ENCODE measurements at regions of chr9 and their contacts with region 1.

Region 1: DNA sequence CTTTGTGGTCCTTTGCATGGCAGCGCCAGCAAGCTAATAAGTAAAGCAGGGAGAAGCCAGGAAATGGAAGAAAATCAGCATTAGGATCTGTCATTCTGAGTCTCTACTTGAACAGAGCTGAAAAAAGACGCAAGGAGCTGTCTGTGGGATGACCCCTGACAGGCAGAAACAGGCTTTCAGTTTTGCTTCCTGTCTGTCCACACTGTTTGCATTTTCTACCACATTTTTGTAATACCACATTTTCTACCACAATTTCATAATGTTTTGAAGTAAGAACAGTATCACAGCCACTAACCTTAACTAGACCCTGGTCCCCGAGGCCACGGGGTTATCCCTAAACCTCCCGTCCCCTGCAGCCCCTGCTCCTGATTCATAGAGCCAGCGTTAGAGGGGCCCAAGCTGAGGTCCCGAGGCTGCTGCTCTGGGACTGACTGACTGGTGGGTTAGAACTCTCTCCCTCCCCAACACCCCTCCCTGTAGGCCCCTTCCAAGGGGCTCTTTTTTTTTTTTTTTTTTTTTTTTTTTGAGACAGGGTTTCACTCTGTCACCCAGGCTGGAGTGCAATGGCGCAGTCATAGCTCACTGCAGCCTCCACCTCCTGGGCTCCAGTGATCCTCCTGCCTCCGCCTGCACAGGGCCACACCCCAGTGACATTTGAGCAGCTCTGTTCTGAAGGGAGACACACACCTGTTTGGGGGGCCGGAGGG is 4.0 kb upstream of the CLIC3 start:
- DNase-seq: peak; percentile 82
- ATAC-seq: peak; percentile 87
- H3K4me3 ChIP-seq: no peak overlapping the region
- H3K27ac ChIP-seq: no peak overlapping the region
- H3K4me1 ChIP-seq: peaks cover 37% of the 10 kb centered on the region
- H3K27me3 ChIP-seq: peaks cover 2 to 10% of the 10 kb centered on the region in 2 experiments; a peak in 3 of 4 replicates
- CTCF ChIP-seq: no peak
- EP300 ChIP-seq: peak; percentile 50 to 51; a peak in 2 of 4 replicates
- POLR2A ChIP-seq: no peak
- RAD21 ChIP-seq: no peak

Region 2: GRCh38 chr9:136567651-136568287 is 432.6 kb before region 1 on chr9:
- CTCF ChIA-PET with region 1: no interaction called
- POLR2A ChIA-PET with region 1: no interaction called
- RAD21 ChIA-PET with region 1: no interaction called
- SMC1A ChIA-PET with region 1: no interaction called
- in situ Hi-C with region 1: no loop called
- intact Hi-C with region 1: no loop called
- DNase-seq: no peak
- ATAC-seq: no peak
- H3K4me3 ChIP-seq: no peak overlapping the region
- H3K27ac ChIP-seq: no peak overlapping the region
- H3K4me1 ChIP-seq: peaks cover 24% of the 10 kb centered on the region
- H3K27me3 ChIP-seq: no peaks in the 10 kb centered on the region
- CTCF ChIP-seq: no peak
- EP300 ChIP-seq: no peak
- POLR2A ChIP-seq: no peak
- RAD21 ChIP-seq: no peak

Region 3: GRCh38 chr9:136965771-136966484 is 34.4 kb before region 1 on chr9:
- CTCF ChIA-PET with region 1: no interaction called
- POLR2A ChIA-PET with region 1: no interaction called
- RAD21 ChIA-PET with region 1: interaction called, 10 read pairs
- SMC1A ChIA-PET with region 1: no interaction called
- in situ Hi-C with region 1: no loop called
- intact Hi-C with region 1: no loop called
- DNase-seq: no peak
- ATAC-seq: peak; percentile 78
- H3K4me3 ChIP-seq: no peak overlapping the region
- H3K27ac ChIP-seq: no peak overlapping the region
- H3K4me1 ChIP-seq: peaks cover 7% of the 10 kb centered on the region
- H3K27me3 ChIP-seq: no peaks in the 10 kb centered on the region
- CTCF ChIP-seq: no peak
- EP300 ChIP-seq: no peak
- POLR2A ChIP-seq: no peak
- RAD21 ChIP-seq: no peak

Measured in GM12878 (cell line).